Activated CD8-positive, alpha-beta T cell treated with anti-CD3 and anti-CD28 coated beads for 36 hours (primary cell): ENCODE measurements at regions of chr13 and their contacts with region 1.

Region 1: GRCh38 chr13:111429064-111429558 is 108.7 kb downstream of the TEX29 start:
- DNase-seq: peak; percentile 76
- ATAC-seq: peak; percentile 94
- H3K4me3 Mint-ChIP-seq: no peak overlapping the region
- H3K27ac Mint-ChIP-seq: no peak overlapping the region
- H3K4me1 Mint-ChIP-seq: no peaks in the 10 kb centered on the region
- H3K27me3 Mint-ChIP-seq: peaks cover 2% of the 10 kb centered on the region
- CTCF ChIP-seq: peak; percentile 62

Region 2: GRCh38 chr13:111443981-111444380 is 14.9 kb after region 1 on chr13:
- CTCF ChIA-PET with region 1: interaction called, 15 read pairs
- POLR2A ChIA-PET with region 1: interaction called, 3 read pairs
- intact Hi-C with region 1: no loop called
- DNase-seq: no peak
- ATAC-seq: no peak
- H3K4me3 Mint-ChIP-seq: no peak overlapping the region
- H3K27ac Mint-ChIP-seq: no peak overlapping the region
- H3K4me1 Mint-ChIP-seq: no peaks in the 10 kb centered on the region
- H3K27me3 Mint-ChIP-seq: peaks cover 8% of the 10 kb centered on the region
- CTCF ChIP-seq: no peak

Region 3: GRCh38 chr13:111853721-111854120 is 424.6 kb after region 1 on chr13:
- CTCF ChIA-PET with region 1: no interaction called
- POLR2A ChIA-PET with region 1: no interaction called
- intact Hi-C with region 1: no loop called
- DNase-seq: no peak
- ATAC-seq: no peak
- H3K4me3 Mint-ChIP-seq: no peak overlapping the region
- H3K27ac Mint-ChIP-seq: no peak overlapping the region
- H3K4me1 Mint-ChIP-seq: no peaks in the 10 kb centered on the region
- H3K27me3 Mint-ChIP-seq: no peaks in the 10 kb centered on the region
- CTCF ChIP-seq: no peak

Region 4: DNA sequence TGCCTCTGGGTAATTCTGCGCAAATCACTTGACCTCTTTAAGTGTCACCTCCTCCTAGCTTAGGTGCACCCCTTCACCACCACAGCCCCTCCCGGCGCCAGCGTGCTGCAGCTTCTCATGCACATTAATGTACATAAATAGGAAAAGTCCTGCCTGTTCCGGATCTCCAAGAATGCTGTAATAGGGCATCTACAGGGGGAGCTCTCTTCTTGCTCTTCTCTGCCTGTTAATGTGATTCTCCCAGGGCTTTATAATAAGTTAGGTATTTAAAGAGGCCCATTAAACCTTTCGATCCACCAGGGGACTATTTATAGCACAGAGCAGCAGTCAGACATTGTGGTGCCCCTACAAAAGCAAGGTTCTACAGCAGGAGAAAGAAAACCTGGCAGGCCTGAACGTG is 673.1 kb after region 1 on chr13:
- CTCF ChIA-PET with region 1: no interaction called
- POLR2A ChIA-PET with region 1: no interaction called
- intact Hi-C with region 1: no loop called
- DNase-seq: no peak
- ATAC-seq: no peak
- H3K4me3 Mint-ChIP-seq: no peak overlapping the region
- H3K27ac Mint-ChIP-seq: no peak overlapping the region
- H3K4me1 Mint-ChIP-seq: peaks cover 2% of the 10 kb centered on the region
- H3K27me3 Mint-ChIP-seq: peaks cover 42% of the 10 kb centered on the region
- CTCF ChIP-seq: no peak